Sigmoid colon (tissue), 7 donors: ENCODE measurements at regions of chr7 and their contacts with region 1.

Region 1: GRCh38 chr7:74043523-74043951 is 15.6 kb downstream of the ELN start:
- DNase-seq: peak; percentile 86
- H3K4me3 ChIP-seq: peak overlapping the region in 2 of 4 donors; percentile 7 to 24
- H3K27ac ChIP-seq: peak overlapping the region; percentile 39 to 76 (median 70)
- H3K4me1 ChIP-seq: peaks cover 0 to 34% (median 27%) of the 10 kb centered on the region in 4 donors
- H3K27me3 ChIP-seq: no peaks in the 10 kb centered on the region
- CTCF ChIP-seq: no peak
- EP300 ChIP-seq: peak in 2 of 4 donors; percentile 62 to 65
- POLR2A ChIP-seq: no peak

Region 2: DNA sequence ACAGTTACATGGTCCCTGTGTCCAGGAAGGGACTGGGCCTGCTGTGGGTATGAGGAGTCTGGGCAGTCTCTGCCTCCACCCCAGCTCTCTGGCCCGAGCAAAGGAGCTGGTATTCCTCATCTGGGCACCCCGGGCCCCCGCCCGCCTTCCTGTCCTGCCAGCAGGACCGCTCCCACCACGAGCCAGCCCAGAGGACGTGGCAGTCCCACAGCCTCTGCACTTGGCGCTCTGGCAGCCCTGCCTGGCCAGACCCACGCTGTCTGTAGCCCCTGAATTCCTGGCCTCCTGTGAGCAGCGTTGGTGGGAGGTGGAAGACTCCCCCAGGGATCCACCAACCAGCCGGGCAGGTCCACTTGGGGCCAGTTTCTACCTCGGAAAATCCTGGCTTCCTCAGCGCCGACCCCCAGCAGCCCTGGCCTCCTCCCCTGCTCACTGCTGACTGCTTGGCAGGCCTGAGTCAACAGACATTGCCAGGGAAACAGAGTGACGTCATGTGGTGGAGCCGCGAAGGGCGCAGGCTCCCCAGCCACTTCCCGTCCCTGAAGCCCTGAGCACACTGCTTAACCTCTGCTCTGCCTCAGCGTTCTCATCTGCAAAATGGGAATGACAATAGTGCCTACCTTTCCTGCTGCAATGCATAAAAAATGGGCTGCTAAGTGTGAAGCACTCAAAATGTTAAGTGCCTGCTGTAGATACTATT is 18.5 kb after region 1 on chr7:
- intact Hi-C with region 1: loop called (anchors 2 kb)
- DNase-seq: peak; percentile 96
- H3K4me3 ChIP-seq: peak overlapping the region in 3 of 4 donors; percentile 34 to 41 (median 34)
- H3K27ac ChIP-seq: peak overlapping the region; percentile 85 to 93 (median 90)
- H3K4me1 ChIP-seq: peaks cover 0 to 37% (median 33%) of the 10 kb centered on the region in 4 donors
- H3K27me3 ChIP-seq: no peaks in the 10 kb centered on the region
- CTCF ChIP-seq: no peak
- EP300 ChIP-seq: peak in 2 of 4 donors; percentile 53 to 57
- POLR2A ChIP-seq: peak in 1 of 2 donors; percentile 35